Heart left ventricle (tissue), 16 donors: ENCODE measurements at regions of chr17 and their contacts with region 1.

Region 1: DNA sequence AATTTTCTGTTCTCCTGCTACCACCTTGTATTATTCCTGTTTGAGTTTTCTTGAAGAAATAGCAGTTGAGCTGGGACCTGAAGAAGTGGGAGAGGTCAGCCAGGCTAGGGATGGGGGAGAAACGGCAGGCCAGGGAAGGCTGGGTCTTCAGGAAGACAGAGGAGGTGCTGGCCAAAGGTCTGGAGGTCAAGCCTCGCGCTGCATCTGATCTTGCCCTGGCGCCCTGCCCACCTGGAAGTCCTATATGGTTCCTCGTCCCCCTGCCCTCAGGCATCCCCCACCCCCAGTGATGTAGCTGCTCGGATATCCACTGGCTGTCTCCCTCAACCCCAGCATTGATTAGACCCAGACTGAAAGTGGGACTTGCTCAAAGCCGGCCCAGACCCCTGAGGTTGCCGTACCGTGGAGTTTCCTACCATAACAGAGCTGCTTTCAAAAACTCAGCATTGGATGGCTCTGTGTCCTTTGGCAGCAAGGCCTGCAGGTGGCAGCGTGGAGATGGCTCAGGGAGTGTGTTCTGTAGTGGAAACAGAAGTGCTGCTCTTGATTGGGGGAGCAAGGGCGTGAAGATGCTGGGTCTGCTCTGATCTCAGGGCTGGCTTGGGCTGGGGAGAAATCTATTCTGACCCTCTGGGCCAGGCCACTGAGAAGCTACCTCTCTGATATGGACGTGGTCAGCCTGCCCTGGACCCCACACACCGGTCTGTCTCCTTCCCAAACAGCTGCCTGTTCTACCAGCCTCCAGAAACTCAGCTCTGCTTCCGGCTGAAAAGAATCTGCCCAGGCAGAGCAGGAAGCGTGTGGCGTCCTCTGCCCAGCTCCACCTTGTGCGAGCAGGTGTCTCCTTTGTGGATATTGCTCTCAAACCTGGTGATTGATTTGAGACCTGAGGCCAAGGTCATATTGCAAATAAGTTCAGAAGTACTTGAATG is 107.0 kb upstream of the CACNG5 start:
- DNase-seq: peak in 4 of 5 donors; percentile 37 to 65 (median 48)
- ATAC-seq: peak; percentile 73 to 80 (median 78)
- H3K4me3 ChIP-seq: no peak overlapping the region
- H3K27ac ChIP-seq: no peak overlapping the region
- H3K4me1 ChIP-seq: peaks cover 0 to 19% (median 11%) of the 10 kb centered on the region in 12 donors
- H3K27me3 ChIP-seq: no peaks in the 10 kb centered on the region
- CTCF ChIP-seq: peak; percentile 24 to 64 (median 50)
- POLR2A ChIP-seq: no peak

Region 2: GRCh38 chr17:66582373-66583067 is 145.4 kb before region 1 on chr17:
- intact Hi-C with region 1: no loop called
- DNase-seq: no peak
- ATAC-seq: no peak
- H3K4me3 ChIP-seq: no peak overlapping the region
- H3K27ac ChIP-seq: no peak overlapping the region
- H3K4me1 ChIP-seq: peaks cover 0 to 40% (median 13%) of the 10 kb centered on the region in 12 donors
- H3K27me3 ChIP-seq: no peaks in the 10 kb centered on the region
- CTCF ChIP-seq: peak in 1 of 12 donors; percentile 8
- POLR2A ChIP-seq: no peak

Region 3: GRCh38 chr17:66906321-66907278 is 178.7 kb after region 1 on chr17:
- intact Hi-C with region 1: loop called in 3 of 10 experiments (anchors 2 to 5 kb)
- DNase-seq: peak; percentile 72 to 89 (median 80)
- ATAC-seq: peak in 2 of 4 donors; percentile 36 to 48
- H3K4me3 ChIP-seq: no peak overlapping the region
- H3K27ac ChIP-seq: no peak overlapping the region
- H3K4me1 ChIP-seq: peaks cover 0 to 11% (median 6%) of the 10 kb centered on the region in 12 donors
- H3K27me3 ChIP-seq: peaks cover 0 to 4% (median 0%) of the 10 kb centered on the region in 9 donors
- CTCF ChIP-seq: peak; percentile 74 to 91 (median 82)
- POLR2A ChIP-seq: no peak

Region 4: GRCh38 chr17:66975604-66976384 is 247.9 kb after region 1 on chr17:
- intact Hi-C with region 1: loop called in 2 of 10 experiments (anchors 10 kb)
- DNase-seq: peak in 3 of 5 donors; percentile 24 to 46 (median 38)
- ATAC-seq: peak in 3 of 4 donors; percentile 27 to 41 (median 31)
- H3K4me3 ChIP-seq: no peak overlapping the region
- H3K27ac ChIP-seq: no peak overlapping the region
- H3K4me1 ChIP-seq: peaks cover 0 to 34% (median 6%) of the 10 kb centered on the region in 12 donors
- H3K27me3 ChIP-seq: peaks cover 0 to 24% (median 0%) of the 10 kb centered on the region in 9 donors
- CTCF ChIP-seq: peak in 6 of 12 donors; percentile 6 to 27 (median 12)
- POLR2A ChIP-seq: no peak

Region 5: DNA sequence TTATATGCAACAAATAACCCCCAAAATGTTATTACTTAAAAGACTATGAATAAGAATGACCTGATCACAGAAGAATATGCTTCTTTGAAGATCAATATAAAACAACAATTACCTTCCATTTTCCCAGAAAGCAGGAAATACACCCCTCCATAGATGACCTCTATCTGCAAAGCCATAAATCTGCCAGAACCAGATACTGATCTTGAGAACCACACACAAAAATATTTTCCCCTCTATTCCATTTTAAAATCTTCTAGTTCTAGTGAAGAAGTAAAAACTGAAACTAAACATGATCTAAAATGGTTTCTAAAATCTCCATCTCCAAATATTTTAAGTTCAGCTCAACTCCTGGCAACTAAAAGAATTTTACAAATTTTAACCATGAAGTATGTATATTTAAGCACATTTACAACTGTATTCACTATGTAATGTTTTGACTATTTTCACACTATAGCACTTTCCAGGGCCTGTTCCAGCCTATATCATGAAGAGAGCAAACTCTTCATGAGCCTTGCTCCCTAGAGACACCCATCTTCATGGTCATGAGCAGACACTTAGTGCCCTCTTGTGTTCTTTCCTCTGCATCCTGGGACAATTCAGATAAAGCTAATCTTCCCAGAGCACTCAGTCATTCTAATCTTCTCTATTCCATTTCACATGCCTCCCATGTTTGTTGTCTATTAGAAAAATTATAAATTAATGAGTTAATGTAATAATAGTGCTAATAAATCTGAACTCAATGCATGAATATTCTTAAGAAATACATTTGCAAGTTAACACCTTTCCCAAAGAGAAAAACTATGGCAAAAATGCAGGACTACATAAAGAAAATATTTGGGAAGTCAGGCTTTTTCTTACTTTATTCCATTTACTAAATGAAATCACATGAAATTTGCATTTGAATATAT is 430.1 kb after region 1 on chr17:
- intact Hi-C with region 1: loop called in 3 of 10 experiments (anchors 10 kb)
- DNase-seq: no peak
- ATAC-seq: peak in 3 of 4 donors; percentile 69 to 72 (median 69)
- H3K4me3 ChIP-seq: no peak overlapping the region
- H3K27ac ChIP-seq: no peak overlapping the region
- H3K4me1 ChIP-seq: peaks cover 0 to 5% (median 0%) of the 10 kb centered on the region in 12 donors
- H3K27me3 ChIP-seq: no peaks in the 10 kb centered on the region
- CTCF ChIP-seq: peak in 6 of 12 donors; percentile 13 to 42 (median 31)
- POLR2A ChIP-seq: no peak

Region 6: GRCh38 chr17:67165201-67165600 is 437.3 kb after region 1 on chr17:
- intact Hi-C with region 1: loop called in 1 of 10 experiments (anchors 10 kb)
- DNase-seq: peak; percentile 12 to 51 (median 32)
- ATAC-seq: peak in 3 of 4 donors; percentile 85 to 90 (median 87)
- H3K4me3 ChIP-seq: peak overlapping the region in 1 of 12 donors; percentile 2
- H3K27ac ChIP-seq: peak overlapping the region in 1 of 12 donors; percentile 77
- H3K4me1 ChIP-seq: peaks cover 0 to 20% (median 0%) of the 10 kb centered on the region in 12 donors
- H3K27me3 ChIP-seq: no peaks in the 10 kb centered on the region
- CTCF ChIP-seq: peak in 1 of 12 donors; percentile 6
- POLR2A ChIP-seq: no peak